Activated B cell treated with CpG ODN at 0.5 μM for 24 hours (primary cell): ENCODE measurements at regions of chr14 and their contacts with region 1.

Region 1: DNA sequence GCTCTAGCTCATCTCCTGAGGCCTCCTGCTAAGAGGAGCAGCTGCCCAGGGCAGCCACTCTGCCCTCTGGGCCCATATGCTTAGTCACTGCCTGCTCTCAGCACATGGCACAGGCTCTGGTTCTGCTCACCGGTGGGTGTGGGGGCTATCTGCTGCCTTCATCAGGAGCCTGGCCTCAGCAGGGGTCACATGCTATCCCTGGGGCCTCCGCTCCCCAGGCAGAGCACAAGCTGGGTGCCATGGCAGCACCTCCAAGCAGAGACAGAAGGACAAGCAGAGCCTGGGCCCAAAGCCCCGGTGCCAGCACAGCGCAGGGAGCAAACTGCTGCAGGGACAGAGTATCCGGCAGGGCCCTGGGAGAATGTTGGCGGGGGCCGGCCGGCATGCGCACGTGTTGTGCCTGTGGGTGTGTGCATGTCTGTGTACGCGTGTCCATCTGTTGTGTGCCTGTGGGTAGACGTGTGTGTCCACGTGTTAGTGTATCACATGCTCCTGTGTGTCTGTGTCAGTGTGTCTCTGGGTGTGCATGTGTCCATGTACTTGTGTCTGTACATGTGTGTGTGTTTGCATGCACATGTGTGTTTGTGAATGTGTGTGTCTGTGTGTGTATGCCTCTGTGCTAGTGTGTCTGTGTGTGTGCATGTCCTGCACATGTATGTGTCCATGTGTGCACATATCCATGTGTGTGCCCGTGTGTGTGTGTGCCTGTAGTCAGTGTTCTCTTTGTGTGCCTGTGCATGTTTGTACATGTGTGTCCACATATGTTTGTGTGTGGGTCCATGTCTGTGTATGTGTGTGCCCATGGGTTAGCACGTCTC is 326.9 kb downstream of the TMEM121 start:
- DNase-seq: no peak
- ATAC-seq: peak; percentile 4
- H3K4me3 Mint-ChIP-seq: peak overlapping the region; percentile 98
- H3K27ac Mint-ChIP-seq: peak overlapping the region; percentile 99
- H3K4me1 Mint-ChIP-seq: peaks cover 51% of the 10 kb centered on the region
- H3K27me3 Mint-ChIP-seq: no peaks in the 10 kb centered on the region
- CTCF ChIP-seq: no peak

Region 2: DNA sequence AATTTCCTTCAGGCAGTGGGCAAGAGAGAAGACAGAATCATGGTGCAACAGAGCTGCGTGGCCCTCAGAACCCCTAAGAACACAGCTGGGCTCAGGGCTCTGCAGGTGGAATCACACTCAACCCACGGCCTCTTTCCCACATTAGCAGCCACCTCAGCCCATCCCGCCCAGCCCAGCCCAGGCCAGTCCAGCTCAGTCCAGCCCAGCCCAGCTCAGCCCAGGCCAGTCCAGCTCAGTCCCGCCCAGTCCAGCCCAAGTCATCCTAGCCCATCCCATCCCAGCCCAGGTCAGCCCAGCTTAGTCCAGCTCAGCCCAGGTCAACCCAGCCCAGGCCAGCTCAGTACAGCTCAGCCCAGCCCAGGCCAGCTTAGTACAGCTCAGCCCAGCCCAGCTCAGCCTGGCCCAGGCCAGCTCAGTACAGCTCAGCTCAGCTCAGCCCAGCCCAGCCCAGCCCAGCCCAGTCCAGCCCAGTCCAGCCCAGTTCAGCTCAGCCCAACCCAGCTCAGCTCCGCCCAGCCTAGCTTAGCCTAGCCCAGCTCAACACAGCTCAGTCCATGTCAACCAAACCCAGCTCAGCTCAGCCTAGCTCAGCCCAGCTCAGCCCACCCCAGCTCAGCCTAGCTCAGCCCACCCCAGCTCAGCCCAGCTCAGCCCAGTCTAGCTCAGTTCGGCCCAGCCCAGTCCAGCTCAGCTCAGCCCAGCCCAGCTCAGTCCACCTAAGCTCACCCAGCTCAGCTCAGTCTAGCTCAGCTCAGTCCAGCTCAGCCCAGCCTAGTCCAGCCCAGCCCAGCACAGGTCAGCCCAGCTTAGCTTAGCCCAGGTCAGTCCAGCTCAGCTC is 143.8 kb before region 1 on chr14:
- CTCF ChIA-PET with region 1: no interaction called
- POLR2A ChIA-PET with region 1: interaction called, 207 read pairs
- intact Hi-C with region 1: no loop called
- DNase-seq: no peak
- ATAC-seq: no peak
- H3K4me3 Mint-ChIP-seq: peak overlapping the region; percentile 75
- H3K27ac Mint-ChIP-seq: peak overlapping the region; percentile 85
- H3K4me1 Mint-ChIP-seq: peaks cover 48% of the 10 kb centered on the region
- H3K27me3 Mint-ChIP-seq: no peaks in the 10 kb centered on the region
- CTCF ChIP-seq: no peak

Region 3: DNA sequence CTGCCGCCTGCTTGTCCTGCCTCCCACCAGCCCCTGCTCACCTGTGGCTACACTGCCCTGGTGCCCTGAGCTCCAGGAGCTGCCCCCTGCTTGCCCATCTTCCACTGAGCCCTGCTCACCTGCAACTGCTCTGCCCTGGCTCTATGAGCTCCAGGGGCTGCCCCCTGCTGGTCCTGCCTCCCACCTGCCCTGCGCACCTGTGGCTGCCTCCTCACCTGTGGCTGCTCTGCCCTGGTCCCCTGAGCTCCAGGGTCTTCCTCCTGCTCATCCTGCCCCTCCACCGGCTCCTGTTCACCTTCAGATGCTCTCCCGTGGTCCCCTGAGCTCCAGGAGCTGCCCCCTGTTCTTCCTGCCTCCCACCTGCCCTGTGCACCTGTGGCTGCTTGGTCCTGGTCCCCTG is 79.3 kb before region 1 on chr14:
- CTCF ChIA-PET with region 1: no interaction called
- POLR2A ChIA-PET with region 1: interaction called, 89 read pairs
- intact Hi-C with region 1: loop called (anchors 5 kb)
- DNase-seq: no peak
- ATAC-seq: no peak
- H3K4me3 Mint-ChIP-seq: peak overlapping the region; percentile 94
- H3K27ac Mint-ChIP-seq: peak overlapping the region; percentile 89
- H3K4me1 Mint-ChIP-seq: peaks cover 64% of the 10 kb centered on the region
- H3K27me3 Mint-ChIP-seq: no peaks in the 10 kb centered on the region
- CTCF ChIP-seq: no peak

Region 4: GRCh38 chr14:105841022-105842009 is 12.0 kb before region 1 on chr14:
- CTCF ChIA-PET with region 1: no interaction called
- POLR2A ChIA-PET with region 1: interaction called, 16 read pairs
- intact Hi-C with region 1: no loop called
- DNase-seq: no peak
- ATAC-seq: no peak
- H3K4me3 Mint-ChIP-seq: no peak overlapping the region
- H3K27ac Mint-ChIP-seq: peak overlapping the region; percentile 57
- H3K4me1 Mint-ChIP-seq: peaks cover 16% of the 10 kb centered on the region
- H3K27me3 Mint-ChIP-seq: no peaks in the 10 kb centered on the region
- CTCF ChIP-seq: no peak